ENCODE measurements at regions of chr3 and their contacts with region 1.

Region 1: DNA sequence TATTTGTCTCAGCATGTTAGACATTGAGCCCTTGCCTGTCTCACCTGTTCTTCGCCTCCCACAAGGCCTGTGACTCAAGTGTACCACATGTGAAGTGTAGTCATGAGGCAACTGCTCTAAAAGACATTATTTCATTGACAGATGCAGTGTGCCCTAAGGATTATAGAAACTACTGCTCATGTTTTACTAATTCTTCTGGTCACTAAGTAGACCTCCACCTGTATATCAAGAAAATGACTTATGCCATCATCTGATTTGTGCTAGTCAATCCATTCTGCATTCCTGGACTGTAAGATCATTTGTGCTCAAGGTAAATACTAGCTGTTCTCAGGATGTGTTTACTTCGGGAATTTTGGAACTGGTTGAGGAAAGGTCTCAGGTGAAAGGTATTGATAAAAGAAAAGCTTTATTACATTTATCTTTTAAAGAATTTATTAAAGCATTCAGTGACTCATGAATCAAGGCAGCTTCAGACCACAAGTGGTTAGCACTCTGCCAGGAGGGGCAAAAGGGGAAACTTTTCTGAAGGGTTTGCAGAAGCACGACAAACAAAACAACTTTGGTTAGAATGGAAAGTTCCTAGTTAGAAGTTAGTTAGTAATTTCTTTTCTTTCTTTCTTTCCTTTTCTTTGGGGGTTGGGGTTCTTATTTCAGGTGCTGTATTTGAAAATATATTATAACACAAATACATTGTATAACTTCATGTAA is 465.3 kb upstream of the CBLB start:
- DNase-seq: no peak
- ATAC-seq: peak; percentile 78
- H3K4me3 ChIP-seq: no peak overlapping the region
- H3K27ac ChIP-seq: peak overlapping the region; percentile 13; the same call in 1 of the 2 replicates
- H3K4me1 ChIP-seq: peaks cover 20% of the 10 kb centered on the region
- H3K27me3 ChIP-seq: no peaks in the 10 kb centered on the region
- CTCF ChIP-seq: no peak
- EP300 ChIP-seq: peak in 1 of 2 experiments; percentile 59; a peak in 1 of 4 replicates
- POLR2A ChIP-seq: no peak
- RAD21 ChIP-seq: 0 out of 2 replicates have a peak, but pooled peaks have one; percentile 7

Region 2: DNA sequence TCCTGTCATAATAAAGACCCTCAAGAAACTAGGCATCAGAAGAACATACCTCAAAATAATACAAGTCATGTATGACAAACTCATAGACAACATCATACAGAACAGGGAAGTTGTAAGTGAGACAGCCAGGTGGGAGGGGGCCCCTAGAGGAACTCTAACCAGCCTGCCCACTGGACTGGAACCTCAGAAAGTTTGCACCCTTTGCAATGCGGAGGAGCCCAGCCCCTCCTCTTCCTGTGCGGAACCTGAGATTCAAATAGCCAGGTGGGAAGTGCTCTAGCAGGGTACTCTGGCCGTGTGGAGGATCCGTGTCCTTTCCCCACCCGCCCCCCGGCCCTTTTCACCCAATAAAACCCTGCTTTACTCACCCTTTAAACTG is 78.2 kb before region 1 on chr3:
- CTCF ChIA-PET with region 1: interaction called, 4 read pairs
- POLR2A ChIA-PET with region 1: interaction called, 3 read pairs
- RAD21 ChIA-PET with region 1: interaction called, 19 read pairs
- SMC1A ChIA-PET with region 1: interaction called, 10 read pairs
- in situ Hi-C with region 1: no loop called
- intact Hi-C with region 1: loop called (anchors 2 kb)
- DNase-seq: peak; percentile 93
- ATAC-seq: peak; percentile 88
- H3K4me3 ChIP-seq: peak overlapping the region; percentile 83
- H3K27ac ChIP-seq: peak overlapping the region; percentile 99
- H3K4me1 ChIP-seq: no peaks in the 10 kb centered on the region
- H3K27me3 ChIP-seq: no peaks in the 10 kb centered on the region
- CTCF ChIP-seq: no peak
- EP300 ChIP-seq: peak in 1 of 2 experiments; percentile 82; a peak in 2 of 4 replicates
- POLR2A ChIP-seq: peak; percentile 71
- RAD21 ChIP-seq: peak; percentile 7; the same call in 1 of the 2 replicates

Region 3: GRCh38 chr3:106552351-106553043 is 218.4 kb after region 1 on chr3:
- CTCF ChIA-PET with region 1: no interaction called
- POLR2A ChIA-PET with region 1: no interaction called
- RAD21 ChIA-PET with region 1: no interaction called
- SMC1A ChIA-PET with region 1: no interaction called
- in situ Hi-C with region 1: no loop called
- intact Hi-C with region 1: no loop called
- DNase-seq: no peak
- ATAC-seq: no peak
- H3K4me3 ChIP-seq: no peak overlapping the region
- H3K27ac ChIP-seq: no peak overlapping the region
- H3K4me1 ChIP-seq: no peaks in the 10 kb centered on the region
- H3K27me3 ChIP-seq: no peaks in the 10 kb centered on the region
- CTCF ChIP-seq: no peak
- EP300 ChIP-seq: no peak
- POLR2A ChIP-seq: no peak
- RAD21 ChIP-seq: no peak